Breast epithelium (tissue), 4 donors: ENCODE measurements at regions of chr13 and their contacts with region 1.

Region 1: GRCh38 chr13:35978603-35979316 is 152.4 kb downstream of the DCLK1 start:
- DNase-seq: no peak
- H3K4me3 ChIP-seq: peak overlapping the region in 1 of 3 donors; percentile 44
- H3K27ac ChIP-seq: peak overlapping the region; percentile 75 to 83
- H3K4me1 ChIP-seq: peaks cover 0 to 7% of the 10 kb centered on the region in 2 donors
- H3K27me3 ChIP-seq: no peaks in the 10 kb centered on the region
- CTCF ChIP-seq: peak; percentile 85 to 89 (median 87)
- POLR2A ChIP-seq: no peak

Region 2: GRCh38 chr13:35139591-35139990 is 839.2 kb before region 1 on chr13:
- intact Hi-C with region 1: no loop called
- DNase-seq: no peak
- H3K4me3 ChIP-seq: no peak overlapping the region
- H3K27ac ChIP-seq: no peak overlapping the region
- H3K4me1 ChIP-seq: no peaks in the 10 kb centered on the region
- H3K27me3 ChIP-seq: no peaks in the 10 kb centered on the region
- CTCF ChIP-seq: no peak
- POLR2A ChIP-seq: no peak

Region 3: GRCh38 chr13:36251526-36251925 is 272.8 kb after region 1 on chr13:
- intact Hi-C with region 1: loop called (anchors 10 kb)
- DNase-seq: no peak
- H3K4me3 ChIP-seq: no peak overlapping the region
- H3K27ac ChIP-seq: no peak overlapping the region
- H3K4me1 ChIP-seq: no peaks in the 10 kb centered on the region
- H3K27me3 ChIP-seq: no peaks in the 10 kb centered on the region
- CTCF ChIP-seq: no peak
- POLR2A ChIP-seq: no peak